ENCODE measurements at regions of chr1 and their contacts with region 1.

Region 1: DNA sequence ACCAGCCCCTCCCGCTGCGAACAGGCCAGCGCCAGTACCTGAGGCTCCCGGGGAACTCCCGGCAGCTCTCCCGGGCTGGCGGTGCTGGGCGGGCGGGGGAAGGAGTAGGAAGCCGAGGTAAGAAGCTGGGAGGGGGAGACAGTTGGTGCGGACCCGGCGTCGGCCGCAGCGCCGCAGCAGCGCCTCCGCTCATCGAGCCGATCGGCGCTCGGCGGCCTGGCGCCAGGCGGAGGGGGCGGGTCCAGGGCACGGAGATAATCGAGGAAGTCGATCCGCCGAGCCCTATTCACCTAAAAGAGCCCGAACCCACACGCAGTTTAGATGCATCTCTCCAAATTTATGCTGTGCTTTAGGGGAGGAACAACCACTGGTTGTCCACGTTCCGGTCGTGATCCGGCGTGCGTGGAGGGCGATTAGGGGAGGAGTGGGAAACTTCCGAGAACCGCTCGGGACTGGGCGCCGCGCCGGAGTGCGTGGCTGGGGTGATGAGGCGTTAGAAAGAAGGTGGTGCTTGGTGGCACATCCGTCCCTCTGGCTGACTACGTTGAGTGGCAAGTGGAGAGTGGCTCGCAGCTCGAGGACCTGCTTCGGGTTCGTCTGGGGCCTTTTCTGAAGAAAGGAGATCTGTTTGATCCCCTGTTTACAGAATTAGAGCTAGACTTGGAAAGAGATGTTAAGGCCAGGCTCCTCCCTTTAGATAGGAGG is at the start of gene VAMP4:
- DNase-seq: peak; percentile 85 to 90 (median 89)
- H3K4me3 ChIP-seq: peak within 1 kb of the TSS; percentile 84 to 92
- H3K4me3 Mint-ChIP-seq: peak within 1 kb of the TSS; percentile 97 to 100 (median 100)
- H3K27ac ChIP-seq: peak within 1 kb of the TSS; percentile 96
- H3K27ac Mint-ChIP-seq: peak within 1 kb of the TSS; percentile 98 to 100 (median 99)
- H3K4me1 ChIP-seq: peaks cover 44% of the 10 kb centered on the region
- H3K4me1 Mint-ChIP-seq: peaks cover 31 to 62% (median 48%) of the 10 kb centered on the region in 4 donors
- H3K27me3 ChIP-seq: no peaks in the 10 kb centered on the region
- H3K27me3 Mint-ChIP-seq: no peaks in the 10 kb centered on the region
- total RNA-seq, gene VAMP4: 29.4 to 32.0 TPM

Region 2: GRCh38 chr1:171654942-171655745 is 86.9 kb before region 1 on chr1:
- CTCF ChIA-PET with region 1: interaction called, 4 read pairs
- POLR2A ChIA-PET with region 1: no interaction called
- intact Hi-C with region 1: loop called (anchors 1 kb)
- DNase-seq: peak; percentile 38 to 62 (median 52)
- H3K4me3 ChIP-seq: no peak overlapping the region
- H3K4me3 Mint-ChIP-seq: peak overlapping the region; percentile 31 to 74 (median 61)
- H3K27ac ChIP-seq: no peak overlapping the region
- H3K27ac Mint-ChIP-seq: no peak overlapping the region
- H3K4me1 ChIP-seq: peaks cover 12% of the 10 kb centered on the region
- H3K4me1 Mint-ChIP-seq: peaks cover 9 to 13% (median 10%) of the 10 kb centered on the region in 4 donors
- H3K27me3 ChIP-seq: no peaks in the 10 kb centered on the region
- H3K27me3 Mint-ChIP-seq: peaks cover 5 to 11% of the 10 kb centered on the region in 2 donors

Region 3: DNA sequence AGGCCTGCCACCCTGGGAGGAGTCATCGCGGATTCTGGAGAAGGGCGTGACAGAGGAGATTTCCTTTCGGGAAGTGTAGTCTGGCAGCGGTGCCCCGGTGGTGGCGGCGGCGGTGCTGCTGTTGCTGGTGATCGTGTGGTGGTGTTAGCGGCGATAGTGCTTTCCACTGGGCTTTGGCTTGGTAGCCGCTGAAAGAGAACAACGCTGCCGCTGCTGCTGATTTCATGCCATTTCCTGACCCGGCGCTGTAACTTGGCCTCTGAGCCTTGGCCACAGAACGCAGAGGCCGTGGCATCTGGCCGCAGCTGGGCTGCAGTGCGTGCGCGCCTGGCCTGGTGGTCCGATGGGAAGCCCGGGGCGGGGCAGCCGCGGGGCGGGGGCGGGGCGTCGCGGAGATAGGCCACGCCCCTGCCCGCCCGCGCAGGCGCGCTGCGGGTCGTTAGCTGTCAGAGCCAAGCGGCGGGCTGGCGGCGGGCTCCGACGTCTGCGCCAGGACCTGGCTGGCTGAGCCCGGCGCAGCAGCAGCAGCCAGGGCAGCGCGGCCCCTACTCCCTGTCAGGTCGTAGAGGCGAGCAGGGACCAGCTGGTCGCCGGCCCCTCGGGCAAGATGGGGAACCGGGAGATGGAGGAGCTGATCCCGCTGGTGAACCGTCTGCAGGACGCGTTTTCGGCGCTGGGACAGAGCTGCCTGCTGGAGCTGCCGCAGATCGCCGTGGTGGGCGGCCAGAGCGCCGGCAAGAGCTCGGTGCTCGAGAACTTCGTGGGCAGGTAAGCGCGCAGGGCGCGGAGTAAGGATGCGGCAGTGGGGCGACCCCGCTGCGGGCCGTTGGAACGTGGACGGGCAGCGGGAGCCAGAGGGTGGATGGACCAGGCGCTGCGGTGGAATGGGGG is 99.3 kb after region 1 on chr1 and contains the start of gene DNM3:
- CTCF ChIA-PET with region 1: no interaction called
- POLR2A ChIA-PET with region 1: interaction called, 16 read pairs
- intact Hi-C with region 1: loop called (anchors 1 kb)
- DNase-seq: peak; percentile 70 to 89 (median 85)
- H3K4me3 ChIP-seq: peak within 1 kb of the TSS; percentile 43 to 66
- H3K4me3 Mint-ChIP-seq: peak within 1 kb of the TSS; percentile 88 to 93 (median 89)
- H3K27ac ChIP-seq: peak within 1 kb of the TSS; percentile 41
- H3K27ac Mint-ChIP-seq: peak within 1 kb of the TSS; percentile 62 to 94 (median 81)
- H3K4me1 ChIP-seq: peaks cover 16% of the 10 kb centered on the region
- H3K4me1 Mint-ChIP-seq: peaks cover 12 to 20% (median 15%) of the 10 kb centered on the region in 4 donors
- H3K27me3 ChIP-seq: peaks cover 13% of the 10 kb centered on the region
- H3K27me3 Mint-ChIP-seq: peaks cover 7 to 10% of the 10 kb centered on the region in 2 donors
- total RNA-seq, gene DNM3: 2.0 to 2.7 TPM

Measured in CD4-positive, alpha-beta memory T cell (primary cell).